ENCODE measurements at regions of chr1 and their contacts with region 1.

Region 1: GRCh38 chr1:173429471-173430402 is 47.4 kb upstream of the PRDX6 start:
- DNase-seq: peak; percentile 74 to 88 (median 85)
- H3K4me3 ChIP-seq: peak overlapping the region in 6 of 7 experiments; percentile 2 to 72 (median 40)
- H3K27ac ChIP-seq: peak overlapping the region in 1 of 2 experiments; percentile 68
- H3K4me1 ChIP-seq: peaks cover 11 to 24% (median 16%) of the 10 kb centered on the region in 4 experiments
- H3K27me3 ChIP-seq: no peaks in the 10 kb centered on the region

Region 2: GRCh38 chr1:173418107-173418985 is 11.4 kb before region 1 on chr1:
- CTCF ChIA-PET with region 1: interaction called, 34 read pairs
- POLR2A ChIA-PET with region 1: no interaction called
- DNase-seq: peak in 2 of 3 donors; percentile 40 to 44
- H3K4me3 ChIP-seq: no peak overlapping the region
- H3K27ac ChIP-seq: no peak overlapping the region
- H3K4me1 ChIP-seq: peaks cover 6 to 30% (median 21%) of the 10 kb centered on the region in 4 experiments
- H3K27me3 ChIP-seq: no peaks in the 10 kb centered on the region

Region 3: DNA sequence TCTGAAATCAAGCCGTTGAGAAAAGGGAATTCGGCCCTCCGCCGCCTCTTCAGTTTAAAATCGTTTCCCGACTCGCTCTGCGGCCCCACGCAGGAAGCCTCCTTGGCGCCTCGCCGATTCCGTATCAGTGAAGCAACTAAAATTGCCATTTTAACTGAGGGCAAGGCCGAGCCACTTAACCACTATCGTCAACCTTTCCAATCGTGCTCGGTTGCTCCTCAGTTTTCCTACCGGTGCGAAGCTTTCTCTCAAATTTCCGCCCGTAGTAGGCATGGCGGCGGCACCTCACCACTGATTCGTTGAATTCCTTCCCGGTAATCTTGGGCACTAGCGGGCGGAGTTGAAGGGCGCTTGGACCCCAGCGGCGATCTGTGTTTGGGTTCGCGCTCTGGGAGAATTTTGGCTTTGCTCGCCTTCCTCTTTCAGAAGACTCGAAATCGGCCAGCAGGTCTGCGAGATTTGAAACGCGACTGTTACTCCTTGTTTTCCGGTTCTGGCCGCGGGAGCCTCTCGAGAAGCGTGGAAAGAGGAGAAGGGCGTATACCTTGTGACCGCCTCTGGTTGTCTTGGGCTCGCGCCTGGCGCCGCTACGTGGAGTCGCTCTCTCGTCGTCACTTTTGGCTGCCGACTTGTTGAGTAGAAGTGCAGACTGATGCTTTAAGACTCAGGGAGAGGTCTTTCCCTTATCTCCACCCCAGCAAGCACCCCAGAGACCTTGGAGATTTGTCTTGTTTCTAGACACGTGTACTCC is 394.8 kb after region 1 on chr1 and contains the starts of genes CENPL and DARS2:
- CTCF ChIA-PET with region 1: interaction called, 15 read pairs
- POLR2A ChIA-PET with region 1: interaction called, 5 read pairs
- DNase-seq: peak; percentile 98 to 99 (median 99)
- H3K4me3 ChIP-seq: peak within 1 kb of the TSS; percentile 79 to 100 (median 96)
- H3K27ac ChIP-seq: peak within 1 kb of the TSS; percentile 84 to 89
- H3K4me1 ChIP-seq: peaks cover 9 to 29% (median 10%) of the 10 kb centered on the region in 4 experiments
- H3K27me3 ChIP-seq: no peaks in the 10 kb centered on the region

Measured in common myeloid progenitor, CD34-positive (primary cell).